Endothelial cell of umbilical vein (primary cell): ENCODE measurements at regions of chr9 and their contacts with region 1.

Region 1: GRCh38 chr9:114004221-114004716 is 73.8 kb downstream of the AMBP start:
- DNase-seq: peak; percentile 63
- H3K4me3 ChIP-seq: no peak overlapping the region
- H3K27ac ChIP-seq: peak overlapping the region; percentile 75
- H3K4me1 ChIP-seq: peaks cover 24% of the 10 kb centered on the region
- H3K27me3 ChIP-seq: no peaks in the 10 kb centered on the region
- CTCF ChIP-seq: no peak
- POLR2A ChIP-seq: no peak

Region 2: GRCh38 chr9:113682297-113682771 is 321.9 kb before region 1 on chr9:
- CTCF ChIA-PET with region 1: no interaction called
- POLR2A ChIA-PET with region 1: no interaction called
- dilution Hi-C with region 1: no loop called
- intact Hi-C with region 1: loop called (anchors 5 kb)
- DNase-seq: peak; percentile 85
- H3K4me3 ChIP-seq: no peak overlapping the region
- H3K27ac ChIP-seq: no peak overlapping the region
- H3K4me1 ChIP-seq: no peaks in the 10 kb centered on the region
- H3K27me3 ChIP-seq: peaks cover 9 to 11% of the 10 kb centered on the region in 2 experiments
- CTCF ChIP-seq: peak; percentile 92 to 95
- POLR2A ChIP-seq: no peak

Region 3: DNA sequence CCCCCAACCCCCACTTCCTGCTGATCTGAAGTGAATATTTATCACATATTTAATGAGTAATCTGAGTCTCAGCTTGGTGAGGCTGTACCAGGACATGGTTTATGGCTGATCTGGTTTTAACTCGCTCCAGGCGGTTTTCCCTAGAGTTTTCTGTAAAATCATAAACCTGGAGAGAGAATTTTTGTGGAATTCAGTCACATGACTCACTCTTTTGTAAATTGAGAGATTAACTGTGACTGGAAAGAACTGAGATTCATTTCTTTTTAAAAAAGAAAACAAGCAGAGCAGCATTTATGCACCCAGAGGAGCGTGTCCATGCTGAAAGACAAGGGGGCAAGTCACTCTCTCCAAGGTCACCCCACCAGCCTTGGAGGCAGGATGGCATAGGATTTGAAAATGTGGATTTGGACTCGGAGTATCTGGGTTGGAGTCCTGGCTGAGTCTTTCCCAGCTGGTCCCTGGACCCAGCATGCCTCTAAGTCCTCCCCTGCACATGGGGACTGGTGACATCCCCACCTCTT is 46.4 kb before region 1 on chr9:
- CTCF ChIA-PET with region 1: no interaction called
- POLR2A ChIA-PET with region 1: interaction called, 8 read pairs
- dilution Hi-C with region 1: no loop called
- intact Hi-C with region 1: loop called (anchors 1 kb)
- DNase-seq: peak; percentile 77
- H3K4me3 ChIP-seq: no peak overlapping the region
- H3K27ac ChIP-seq: peak overlapping the region; percentile 98
- H3K4me1 ChIP-seq: peaks cover 58% of the 10 kb centered on the region
- H3K27me3 ChIP-seq: no peaks in the 10 kb centered on the region
- CTCF ChIP-seq: no peak
- POLR2A ChIP-seq: no peak

Region 4: DNA sequence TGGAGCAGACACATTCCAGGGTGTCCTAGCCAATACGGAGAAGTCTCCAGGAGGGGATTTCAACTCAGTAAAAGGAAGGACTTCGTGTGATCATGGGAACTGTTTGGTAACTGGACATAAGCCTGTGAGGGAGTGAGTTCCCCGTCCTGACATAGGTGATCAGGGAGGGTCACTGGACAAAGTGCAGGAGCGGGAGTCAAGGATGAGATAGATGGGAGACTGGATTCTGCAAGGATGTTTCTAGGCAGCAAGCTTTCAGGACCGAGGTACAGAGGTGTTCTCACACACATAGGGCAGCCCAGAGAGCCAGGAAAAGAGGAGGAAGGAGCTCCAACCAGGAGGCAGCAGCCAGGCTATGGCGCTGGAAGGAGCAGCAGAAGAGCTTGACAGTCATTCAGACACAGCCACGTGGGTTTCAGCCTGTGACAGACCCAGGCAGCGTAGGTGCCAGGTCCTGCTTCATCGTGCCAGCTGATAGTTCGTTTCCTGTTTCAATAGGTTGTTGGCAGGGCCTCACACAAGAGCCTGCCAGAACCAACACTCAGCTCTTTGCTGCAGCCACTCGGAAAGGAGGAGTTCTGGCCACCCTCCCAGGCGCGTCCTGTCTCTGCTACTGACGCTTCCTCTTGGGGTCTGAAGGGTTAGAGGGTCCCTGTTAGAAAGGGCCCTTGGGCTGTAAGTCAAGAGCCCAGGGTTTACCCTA is 10.3 kb before region 1 on chr9:
- CTCF ChIA-PET with region 1: interaction called, 22 read pairs
- POLR2A ChIA-PET with region 1: no interaction called
- dilution Hi-C with region 1: no loop called
- intact Hi-C with region 1: loop called (anchors 1 kb)
- DNase-seq: peak; percentile 95
- H3K4me3 ChIP-seq: no peak overlapping the region
- H3K27ac ChIP-seq: peak overlapping the region; percentile 40
- H3K4me1 ChIP-seq: peaks cover 42% of the 10 kb centered on the region
- H3K27me3 ChIP-seq: no peaks in the 10 kb centered on the region
- CTCF ChIP-seq: no peak
- POLR2A ChIP-seq: no peak

Region 5: DNA sequence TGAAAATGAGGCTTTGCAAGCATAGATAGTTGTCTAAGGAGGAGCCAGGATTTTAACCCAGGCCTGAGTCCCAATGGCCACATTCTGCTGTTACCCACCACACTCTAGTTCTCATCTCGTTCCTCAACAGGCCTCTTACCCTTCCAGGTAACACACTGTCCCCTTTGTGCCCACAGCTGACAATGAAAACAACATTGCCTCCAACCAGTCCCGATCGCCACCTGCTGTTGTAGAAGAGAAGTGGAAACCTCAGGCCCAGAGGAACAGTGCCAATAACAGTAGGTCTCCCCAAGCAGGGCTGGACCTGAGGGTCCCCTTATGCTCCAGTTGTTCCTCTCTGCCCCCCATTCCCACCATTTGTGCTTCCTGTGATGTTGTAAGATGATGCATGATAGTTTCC is 43.4 kb after region 1 on chr9:
- CTCF ChIA-PET with region 1: no interaction called
- POLR2A ChIA-PET with region 1: no interaction called
- dilution Hi-C with region 1: no loop called
- intact Hi-C with region 1: no loop called
- DNase-seq: peak; percentile 19
- H3K4me3 ChIP-seq: no peak overlapping the region
- H3K27ac ChIP-seq: no peak overlapping the region
- H3K4me1 ChIP-seq: peaks cover 4% of the 10 kb centered on the region
- H3K27me3 ChIP-seq: no peaks in the 10 kb centered on the region
- CTCF ChIP-seq: peak in 1 of 2 donors; percentile 29
- POLR2A ChIP-seq: no peak